ENCODE measurements at regions of chr10 and their contacts with region 1.

Region 1: DNA sequence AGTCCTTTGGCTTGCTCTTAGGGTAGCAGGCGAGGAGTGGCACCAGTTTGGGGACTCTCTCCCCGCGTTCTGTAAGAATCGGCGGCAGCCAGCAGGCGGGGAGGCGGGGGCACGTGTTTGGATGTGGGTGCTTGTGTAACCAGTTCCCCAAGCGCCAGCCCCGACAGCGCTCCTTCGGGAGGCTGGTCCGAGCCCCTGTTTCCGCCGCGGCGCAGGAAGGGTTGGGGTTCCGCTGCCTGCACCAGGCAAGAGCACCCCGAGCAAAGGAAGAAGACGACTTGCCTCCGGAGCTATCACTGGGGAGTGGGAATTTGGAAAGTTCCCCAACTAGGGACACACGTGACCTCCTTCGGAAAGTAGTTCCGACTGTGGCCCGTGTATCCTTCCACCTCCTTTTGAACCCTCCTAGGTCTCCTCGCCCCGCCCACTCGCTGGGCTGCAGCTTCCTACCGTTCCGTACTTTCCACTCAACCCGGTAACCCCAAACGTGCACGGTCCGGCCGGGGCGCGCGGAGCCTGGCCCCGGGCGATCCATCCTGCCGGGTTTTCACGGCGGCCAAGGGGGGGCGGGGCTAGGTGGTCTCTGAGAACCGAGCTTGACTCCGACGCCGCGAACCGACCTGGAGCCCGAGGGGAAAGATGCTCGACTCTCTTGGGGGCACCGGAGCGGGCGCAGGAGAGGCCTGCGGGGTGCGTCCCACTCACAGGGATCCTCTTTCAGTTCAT is 1.2 kb downstream of the KLLN start:
- DNase-seq: peak; percentile 93
- ATAC-seq: peak; percentile 68
- H3K4me3 Mint-ChIP-seq: peak overlapping the region; percentile 97
- H3K27ac Mint-ChIP-seq: peak overlapping the region; percentile 98
- H3K4me1 Mint-ChIP-seq: peaks cover 30% of the 10 kb centered on the region
- H3K27me3 Mint-ChIP-seq: no peaks in the 10 kb centered on the region
- CTCF ChIP-seq: no peak

Region 2: DNA sequence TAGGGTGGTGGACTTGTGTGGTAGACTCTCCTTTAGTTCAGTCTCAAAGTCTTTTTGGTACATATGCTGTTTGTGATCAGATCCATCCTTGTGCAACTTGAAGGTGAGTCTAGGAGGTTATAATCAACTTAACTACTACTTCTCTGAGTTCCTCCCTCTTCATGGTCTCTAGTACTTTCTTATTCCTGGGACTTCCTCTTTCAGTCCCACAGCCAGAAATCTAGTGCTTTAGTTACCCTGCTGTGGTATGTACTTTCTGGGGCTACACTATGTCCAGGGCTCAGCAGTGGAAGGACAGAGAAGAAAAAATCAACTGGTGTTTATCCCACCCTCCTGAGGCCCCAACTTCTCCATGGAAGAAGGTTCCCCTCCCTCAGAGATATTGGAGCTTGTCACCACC is 24.7 kb before region 1 on chr10:
- CTCF ChIA-PET with region 1: no interaction called
- POLR2A ChIA-PET with region 1: no interaction called
- intact Hi-C with region 1: no loop called
- DNase-seq: no peak
- ATAC-seq: peak; percentile 52
- H3K4me3 Mint-ChIP-seq: no peak overlapping the region
- H3K27ac Mint-ChIP-seq: no peak overlapping the region
- H3K4me1 Mint-ChIP-seq: peaks cover 9% of the 10 kb centered on the region
- H3K27me3 Mint-ChIP-seq: peaks cover 1% of the 10 kb centered on the region
- CTCF ChIP-seq: no peak

Region 3: DNA sequence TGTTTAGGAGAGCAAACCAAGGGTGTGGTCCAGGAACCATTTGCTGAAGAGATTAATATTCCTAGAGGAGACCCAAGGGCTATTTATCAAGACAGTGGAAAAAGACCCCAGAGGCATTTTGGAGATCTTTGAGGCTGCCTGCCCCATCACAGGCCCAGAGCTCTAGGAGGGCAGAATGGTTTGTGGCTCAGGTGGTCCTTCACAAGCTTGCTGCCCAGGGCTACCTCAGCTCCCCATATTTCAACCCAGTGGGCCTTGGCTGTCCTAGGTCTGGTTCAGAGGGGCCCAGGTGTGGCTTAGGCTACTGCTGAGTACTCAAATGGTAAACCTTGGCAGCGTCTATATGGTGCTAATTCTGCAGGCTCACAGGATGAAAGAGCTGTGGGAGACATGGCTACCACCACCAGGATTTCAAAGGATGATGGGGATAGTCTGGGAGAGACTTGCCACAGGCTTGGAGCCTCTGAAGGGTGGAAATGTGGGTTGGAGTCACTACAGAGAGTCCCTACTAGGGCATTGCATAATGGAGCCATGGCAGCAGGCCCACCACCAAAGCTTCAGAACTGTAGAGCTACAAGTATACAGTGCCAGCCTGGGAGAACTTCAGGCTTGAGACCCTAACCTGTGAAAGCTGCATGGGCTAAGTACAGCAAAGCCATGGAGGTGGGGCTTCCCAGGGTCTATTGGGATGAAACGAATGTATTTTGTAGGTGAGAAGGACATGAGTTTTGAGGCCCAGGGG is 25.6 kb after region 1 on chr10:
- CTCF ChIA-PET with region 1: interaction called, 3 read pairs
- POLR2A ChIA-PET with region 1: interaction called, 21 read pairs
- intact Hi-C with region 1: loop called (anchors 2 kb)
- DNase-seq: no peak
- ATAC-seq: peak; percentile 21
- H3K4me3 Mint-ChIP-seq: no peak overlapping the region
- H3K27ac Mint-ChIP-seq: no peak overlapping the region
- H3K4me1 Mint-ChIP-seq: peaks cover 40% of the 10 kb centered on the region
- H3K27me3 Mint-ChIP-seq: no peaks in the 10 kb centered on the region
- CTCF ChIP-seq: no peak

Region 4: DNA sequence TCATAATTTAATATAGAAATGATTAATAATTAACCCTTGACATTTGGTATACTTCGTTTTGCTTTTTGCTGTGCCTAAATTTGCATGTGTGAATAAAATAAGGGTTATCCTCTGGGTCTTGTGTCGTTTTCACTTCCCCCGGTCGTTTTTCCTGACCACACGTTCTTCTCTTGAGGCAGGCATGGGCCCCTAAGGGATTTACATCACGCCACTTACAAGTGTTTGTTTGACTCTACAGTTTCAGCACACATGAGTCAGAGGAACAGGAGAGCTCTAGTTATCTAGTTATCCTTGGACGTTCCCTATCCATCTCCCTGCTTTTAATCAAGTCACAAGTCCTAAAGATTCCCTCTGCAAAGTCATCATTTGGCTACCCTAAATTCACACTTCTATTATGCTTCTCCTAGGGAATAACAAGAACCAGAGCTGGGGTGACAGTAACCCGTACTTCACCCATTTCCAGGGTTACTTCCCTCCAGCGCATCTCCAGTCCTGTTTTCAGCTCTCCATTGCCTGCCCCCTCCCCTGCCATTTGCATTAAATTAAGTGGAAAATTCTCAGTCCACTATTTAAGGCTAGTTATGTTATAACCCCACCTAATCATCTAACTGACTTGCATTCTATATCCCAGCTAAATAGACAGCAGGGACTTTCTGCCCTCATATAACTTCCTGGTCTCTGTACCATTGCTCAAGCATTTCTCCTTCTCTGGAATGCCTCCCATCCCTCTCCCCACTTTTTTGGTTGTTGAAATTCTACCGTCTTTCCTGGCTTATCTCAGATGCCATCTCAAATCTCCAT is 208.2 kb after region 1 on chr10:
- CTCF ChIA-PET with region 1: no interaction called
- POLR2A ChIA-PET with region 1: interaction called, 88 read pairs
- intact Hi-C with region 1: loop called (anchors 1 kb)
- DNase-seq: no peak
- ATAC-seq: peak; percentile 81
- H3K4me3 Mint-ChIP-seq: peak overlapping the region; percentile 69
- H3K27ac Mint-ChIP-seq: peak overlapping the region; percentile 91
- H3K4me1 Mint-ChIP-seq: peaks cover 84% of the 10 kb centered on the region
- H3K27me3 Mint-ChIP-seq: no peaks in the 10 kb centered on the region
- CTCF ChIP-seq: no peak

Region 5: GRCh38 chr10:88114368-88114767 is 252.3 kb after region 1 on chr10:
- CTCF ChIA-PET with region 1: interaction called, 45 read pairs
- POLR2A ChIA-PET with region 1: interaction called, 257 read pairs
- intact Hi-C with region 1: loop called (anchors 1 kb)
- DNase-seq: no peak
- ATAC-seq: peak; percentile 40
- H3K4me3 Mint-ChIP-seq: peak overlapping the region; percentile 66
- H3K27ac Mint-ChIP-seq: no peak overlapping the region
- H3K4me1 Mint-ChIP-seq: peaks cover 2% of the 10 kb centered on the region
- H3K27me3 Mint-ChIP-seq: no peaks in the 10 kb centered on the region
- CTCF ChIP-seq: no peak

Region 6: GRCh38 chr10:88315755-88316154 is 453.6 kb after region 1 on chr10:
- CTCF ChIA-PET with region 1: interaction called, 3 read pairs
- POLR2A ChIA-PET with region 1: interaction called, 3 read pairs
- intact Hi-C with region 1: loop called (anchors 2 kb)
- DNase-seq: no peak
- ATAC-seq: no peak
- H3K4me3 Mint-ChIP-seq: no peak overlapping the region
- H3K27ac Mint-ChIP-seq: no peak overlapping the region
- H3K4me1 Mint-ChIP-seq: peaks cover 34% of the 10 kb centered on the region
- H3K27me3 Mint-ChIP-seq: no peaks in the 10 kb centered on the region
- CTCF ChIP-seq: no peak

Region 7: GRCh38 chr10:88553116-88553752 is 691.1 kb after region 1 on chr10:
- CTCF ChIA-PET with region 1: interaction called, 96 read pairs
- POLR2A ChIA-PET with region 1: interaction called, 21 read pairs
- intact Hi-C with region 1: loop called (anchors 1 kb)
- DNase-seq: no peak
- ATAC-seq: peak; percentile 99
- H3K4me3 Mint-ChIP-seq: no peak overlapping the region
- H3K27ac Mint-ChIP-seq: no peak overlapping the region
- H3K4me1 Mint-ChIP-seq: no peaks in the 10 kb centered on the region
- H3K27me3 Mint-ChIP-seq: no peaks in the 10 kb centered on the region
- CTCF ChIP-seq: peak; percentile 55